Activated B cell treated with CpG ODN at 0.5 μM for 24 hours (primary cell): ENCODE measurements at regions of chr13 and their contacts with region 1.

Region 1: GRCh38 chr13:108227651-108228272 is 9.6 kb downstream of the ABHD13 start:
- DNase-seq: no peak
- ATAC-seq: no peak
- H3K4me3 Mint-ChIP-seq: no peak overlapping the region
- H3K27ac Mint-ChIP-seq: no peak overlapping the region
- H3K4me1 Mint-ChIP-seq: peaks cover 54% of the 10 kb centered on the region
- H3K27me3 Mint-ChIP-seq: no peaks in the 10 kb centered on the region
- CTCF ChIP-seq: peak; percentile 96

Region 2: DNA sequence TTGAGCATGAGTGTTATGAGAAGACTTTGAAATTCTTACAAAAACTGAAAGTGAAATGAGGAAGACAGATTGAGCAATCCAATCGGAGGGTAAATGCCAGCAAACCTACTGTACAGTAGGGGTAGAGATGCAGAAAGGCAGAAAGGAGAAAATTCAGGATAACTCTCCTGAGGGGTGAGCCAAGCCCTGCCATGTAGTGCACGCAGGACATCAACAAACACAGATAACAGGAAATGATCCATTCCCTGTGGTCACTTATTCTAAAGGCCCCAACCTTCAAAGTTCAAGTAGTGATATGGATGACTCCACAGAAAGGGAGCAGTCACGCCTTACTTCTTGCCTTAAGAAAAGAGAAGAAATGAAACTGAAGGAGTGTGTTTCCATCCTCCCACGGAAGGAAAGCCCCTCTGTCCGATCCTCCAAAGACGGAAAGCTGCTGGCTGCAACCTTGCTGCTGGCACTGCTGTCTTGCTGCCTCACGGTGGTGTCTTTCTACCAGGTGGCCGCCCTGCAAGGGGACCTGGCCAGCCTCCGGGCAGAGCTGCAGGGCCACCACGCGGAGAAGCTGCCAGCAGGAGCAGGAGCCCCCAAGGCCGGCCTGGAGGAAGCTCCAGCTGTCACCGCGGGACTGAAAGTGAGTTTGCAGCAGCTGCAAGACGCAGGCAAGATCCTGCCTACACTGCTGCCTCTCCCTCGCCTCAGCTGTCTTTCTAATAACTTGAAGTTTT is 42.0 kb after region 1 on chr13 and contains the start of gene TNFSF13B:
- CTCF ChIA-PET with region 1: no interaction called
- POLR2A ChIA-PET with region 1: no interaction called
- intact Hi-C with region 1: loop called (anchors 1 kb)
- DNase-seq: peak; percentile 26
- ATAC-seq: peak; percentile 74
- H3K4me3 Mint-ChIP-seq: peak within 1 kb of the TSS; percentile 83
- H3K27ac Mint-ChIP-seq: peak within 1 kb of the TSS; percentile 91
- H3K4me1 Mint-ChIP-seq: peaks cover 48% of the 10 kb centered on the region
- H3K27me3 Mint-ChIP-seq: no peaks in the 10 kb centered on the region
- CTCF ChIP-seq: no peak
- total RNA-seq, gene TNFSF13B: 1.7 and 2.7 TPM in 2 replicates

Region 3: DNA sequence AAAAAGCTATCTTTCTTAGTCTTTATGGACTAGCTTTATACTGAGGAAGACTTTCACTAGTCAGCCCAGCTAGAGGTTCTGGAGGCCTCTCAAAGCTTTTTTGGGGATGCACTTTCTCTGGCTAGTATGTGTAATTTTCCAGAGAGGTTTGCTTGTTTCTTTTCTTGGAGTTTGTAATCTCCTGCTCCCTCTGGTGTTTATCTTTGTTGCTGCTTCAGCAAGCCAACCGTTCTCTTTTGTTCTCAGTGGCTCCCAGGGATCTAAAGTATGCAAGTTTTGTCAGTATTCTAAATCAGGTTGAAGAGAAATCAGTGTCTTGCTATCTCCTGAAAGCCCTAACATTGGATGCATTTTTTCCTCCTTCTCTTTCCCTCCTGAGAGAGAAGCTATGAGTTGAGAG is 280.5 kb after region 1 on chr13:
- CTCF ChIA-PET with region 1: no interaction called
- POLR2A ChIA-PET with region 1: no interaction called
- intact Hi-C with region 1: loop called (anchors 10 kb)
- DNase-seq: no peak
- ATAC-seq: no peak
- H3K4me3 Mint-ChIP-seq: no peak overlapping the region
- H3K27ac Mint-ChIP-seq: no peak overlapping the region
- H3K4me1 Mint-ChIP-seq: no peaks in the 10 kb centered on the region
- H3K27me3 Mint-ChIP-seq: no peaks in the 10 kb centered on the region
- CTCF ChIP-seq: no peak

Region 4: DNA sequence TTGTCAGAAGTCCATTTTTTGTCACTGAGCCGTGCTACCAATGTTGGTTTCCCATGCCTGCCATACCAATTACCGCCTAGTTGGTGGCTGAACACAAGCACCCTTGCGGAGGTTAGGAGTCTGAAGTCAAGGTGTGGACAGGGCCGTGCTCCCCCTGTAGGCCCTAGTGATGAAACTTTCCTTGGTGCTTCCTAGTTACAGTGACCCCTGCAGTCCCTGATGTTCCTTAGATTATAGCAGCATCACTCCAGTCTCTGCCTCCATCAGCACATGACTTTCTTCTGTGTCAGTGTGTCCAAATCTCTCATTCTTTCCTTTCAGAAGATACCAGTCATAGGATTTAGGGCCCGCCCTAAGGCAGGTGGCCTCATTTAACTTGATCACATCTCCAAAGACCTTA is 500.6 kb after region 1 on chr13:
- CTCF ChIA-PET with region 1: no interaction called
- POLR2A ChIA-PET with region 1: no interaction called
- intact Hi-C with region 1: loop called (anchors 2 kb)
- DNase-seq: no peak
- ATAC-seq: no peak
- H3K4me3 Mint-ChIP-seq: no peak overlapping the region
- H3K27ac Mint-ChIP-seq: no peak overlapping the region
- H3K4me1 Mint-ChIP-seq: no peaks in the 10 kb centered on the region
- H3K27me3 Mint-ChIP-seq: no peaks in the 10 kb centered on the region
- CTCF ChIP-seq: no peak

Region 5: DNA sequence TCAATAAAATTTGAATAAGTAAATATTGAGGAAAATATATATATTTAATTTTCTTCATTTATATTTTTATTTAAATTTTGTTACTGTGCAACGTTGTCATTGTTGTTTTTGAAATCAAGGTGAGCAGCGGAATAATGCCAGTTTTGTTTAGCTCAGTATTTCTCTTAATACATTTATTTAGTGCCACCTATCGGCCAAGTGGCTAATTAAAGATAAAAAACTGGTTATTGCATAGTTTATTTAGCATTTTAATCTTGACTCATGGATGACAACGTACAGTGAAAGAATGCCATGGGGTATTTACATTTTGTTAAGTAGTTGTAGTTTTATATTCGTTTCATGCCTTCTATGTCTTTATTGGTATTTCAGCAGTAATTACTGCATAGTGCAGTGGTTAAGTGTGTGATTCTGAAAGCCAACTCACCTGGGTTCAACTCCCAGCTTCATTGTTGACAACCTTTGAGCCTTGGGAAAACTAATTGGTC is 667.5 kb after region 1 on chr13:
- CTCF ChIA-PET with region 1: interaction called, 6 read pairs
- POLR2A ChIA-PET with region 1: no interaction called
- intact Hi-C with region 1: loop called (anchors 1 kb)
- DNase-seq: no peak
- ATAC-seq: no peak
- H3K4me3 Mint-ChIP-seq: no peak overlapping the region
- H3K27ac Mint-ChIP-seq: no peak overlapping the region
- H3K4me1 Mint-ChIP-seq: no peaks in the 10 kb centered on the region
- H3K27me3 Mint-ChIP-seq: peaks cover 7% of the 10 kb centered on the region
- CTCF ChIP-seq: peak; percentile 71

Region 6: GRCh38 chr13:109615721-109616375 is 1388.1 kb after region 1 on chr13:
- CTCF ChIA-PET with region 1: no interaction called
- POLR2A ChIA-PET with region 1: no interaction called
- intact Hi-C with region 1: no loop called
- DNase-seq: no peak
- ATAC-seq: no peak
- H3K4me3 Mint-ChIP-seq: no peak overlapping the region
- H3K27ac Mint-ChIP-seq: no peak overlapping the region
- H3K4me1 Mint-ChIP-seq: no peaks in the 10 kb centered on the region
- H3K27me3 Mint-ChIP-seq: no peaks in the 10 kb centered on the region
- CTCF ChIP-seq: no peak